Sigmoid colon (tissue), 7 donors: ENCODE measurements at regions of chr6 and their contacts with region 1.

Region 1: DNA sequence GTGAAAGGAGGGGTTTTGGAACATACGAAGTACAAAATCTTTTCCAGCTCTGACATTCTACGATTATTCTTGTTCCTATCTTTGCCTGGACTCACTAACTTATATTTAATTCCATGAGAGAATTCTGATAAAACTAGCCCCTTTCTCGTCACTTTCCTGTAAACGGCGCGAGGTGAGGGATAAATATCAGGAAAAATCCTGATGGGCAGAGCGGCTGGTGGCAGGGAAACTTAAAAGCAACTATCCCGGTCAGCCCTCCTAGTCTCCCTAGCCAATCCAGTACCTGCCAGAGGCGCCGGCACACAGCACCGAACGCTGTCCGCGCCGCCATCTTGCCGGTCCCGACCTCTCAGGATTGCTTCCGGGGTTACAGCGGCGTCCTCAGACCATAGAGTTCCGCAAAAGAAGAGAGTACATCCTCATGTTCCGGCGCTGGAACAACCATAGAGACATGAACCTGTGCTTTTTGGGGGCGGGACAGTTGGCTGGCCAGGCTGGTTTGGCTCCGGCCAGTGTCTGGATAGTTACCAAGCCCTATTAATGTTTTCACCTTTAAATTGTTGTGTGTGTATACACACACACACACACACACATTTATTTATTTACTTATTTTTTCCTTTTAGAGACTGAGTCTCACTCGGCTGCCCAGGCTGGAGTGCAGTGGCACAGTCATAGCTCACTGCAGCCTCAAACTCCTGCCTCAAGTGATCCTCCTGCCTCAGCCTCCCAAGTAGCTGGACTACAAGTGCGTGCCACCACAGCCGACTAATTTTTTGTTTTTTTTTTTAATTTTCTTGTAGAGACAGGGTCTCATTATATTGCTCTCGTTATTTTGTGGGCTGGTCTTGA is at the start of gene MRPS10:
- DNase-seq: peak; percentile 96
- H3K4me3 ChIP-seq: peak within 1 kb of the TSS; percentile 60 to 73 (median 72)
- H3K27ac ChIP-seq: peak within 1 kb of the TSS; percentile 78 to 86 (median 82)
- H3K4me1 ChIP-seq: peaks cover 0 to 15% (median 13%) of the 10 kb centered on the region in 4 donors
- H3K27me3 ChIP-seq: no peaks in the 10 kb centered on the region
- CTCF ChIP-seq: no peak
- EP300 ChIP-seq: no peak
- POLR2A ChIP-seq: peak; percentile 86 to 92
- total RNA-seq, gene MRPS10: 27.7 to 35.2 (median 32.8) TPM

Region 2: GRCh38 chr6:41895300-41896233 is 322.2 kb before region 1 on chr6 and contains the start of gene USP49:
- intact Hi-C with region 1: loop called (anchors 10 kb)
- DNase-seq: peak; percentile 94
- H3K4me3 ChIP-seq: peak within 1 kb of the TSS; percentile 58 to 79 (median 75)
- H3K27ac ChIP-seq: peak within 1 kb of the TSS; percentile 81 to 89 (median 84)
- H3K4me1 ChIP-seq: peaks cover 0 to 20% (median 12%) of the 10 kb centered on the region in 4 donors
- H3K27me3 ChIP-seq: no peaks in the 10 kb centered on the region
- CTCF ChIP-seq: no peak
- EP300 ChIP-seq: no peak
- POLR2A ChIP-seq: no peak
- total RNA-seq, gene USP49: 2.1 to 10.0 (median 3.1) TPM

Region 3: DNA sequence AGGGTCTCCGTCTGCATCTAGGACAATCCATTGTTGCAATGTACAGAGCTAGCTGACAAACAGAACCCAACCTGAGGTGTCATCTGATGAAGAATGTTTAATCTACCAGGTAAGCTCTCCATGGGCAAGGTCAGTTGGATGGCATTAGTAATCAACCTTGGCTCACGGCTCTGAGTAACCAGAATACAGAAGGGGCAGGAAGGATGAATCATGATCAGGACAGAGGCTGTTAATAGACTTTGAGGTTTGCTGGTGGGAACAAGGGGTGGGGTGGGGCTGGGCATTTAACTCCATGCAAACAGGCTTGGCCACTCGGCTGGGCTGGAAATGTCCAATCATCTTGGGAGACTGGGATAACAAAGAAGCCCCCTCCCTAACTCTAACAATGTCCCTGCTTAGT is 77.0 kb after region 1 on chr6:
- intact Hi-C with region 1: no loop called
- DNase-seq: no peak
- H3K4me3 ChIP-seq: no peak overlapping the region
- H3K27ac ChIP-seq: no peak overlapping the region
- H3K4me1 ChIP-seq: no peaks in the 10 kb centered on the region
- H3K27me3 ChIP-seq: no peaks in the 10 kb centered on the region
- CTCF ChIP-seq: no peak
- EP300 ChIP-seq: no peak
- POLR2A ChIP-seq: no peak